ENCODE measurements at regions of chr12 and their contacts with region 1.

Region 1: DNA sequence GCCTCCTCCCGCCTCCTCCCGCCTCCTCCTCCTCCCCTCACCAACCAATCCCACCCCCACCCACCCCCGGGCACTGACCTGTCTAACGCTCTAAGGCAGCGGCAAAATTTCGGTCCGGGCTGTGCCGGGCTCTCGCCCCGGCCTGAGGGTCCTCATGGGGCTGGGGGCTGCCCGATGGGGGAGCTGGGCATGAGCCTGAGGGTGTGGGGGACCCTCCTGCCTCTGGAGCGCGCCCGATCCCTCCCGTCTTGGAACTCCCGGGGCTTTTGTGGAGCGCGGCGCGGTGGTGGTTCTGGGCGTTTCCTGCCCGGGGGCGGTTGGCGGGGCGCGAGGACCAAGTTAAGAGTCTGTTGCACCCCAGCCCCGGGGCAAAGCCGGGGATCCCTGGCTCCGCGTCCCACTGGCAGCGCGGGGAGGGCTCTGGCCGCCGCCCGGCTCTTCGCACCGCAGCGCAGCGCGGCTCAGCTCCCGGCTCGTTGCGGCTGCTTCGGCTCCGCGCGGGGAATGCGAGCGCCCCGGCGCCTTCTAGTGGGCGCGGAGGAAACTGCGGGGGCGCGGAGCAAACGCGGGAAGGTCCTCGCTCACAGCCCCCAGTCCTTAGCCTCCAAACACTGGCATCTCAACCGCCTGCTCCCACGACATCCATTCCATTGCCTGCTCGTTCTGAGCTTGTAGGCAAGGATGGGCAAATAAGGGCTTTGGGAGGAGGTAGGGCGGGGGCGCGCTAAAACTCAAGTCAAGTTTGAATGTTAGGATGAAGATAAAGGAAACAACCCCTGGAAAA is at the start of gene B4GALNT1:
- DNase-seq: peak; percentile 91
- H3K4me3 ChIP-seq: peak within 1 kb of the TSS; percentile 55 to 85
- H3K27ac ChIP-seq: peak within 1 kb of the TSS in 1 of 2 experiments; percentile 11; a peak in 1 of 4 replicates
- H3K4me1 ChIP-seq: peaks cover 0 to 2% of the 10 kb centered on the region in 2 experiments; a peak in 1 of 4 replicates
- H3K27me3 ChIP-seq: no peaks in the 10 kb centered on the region; the same call in 1 of the 2 replicates
- CTCF ChIP-seq: peak; percentile 77
- EP300 ChIP-seq: no peak
- RAD21 ChIP-seq: peak; percentile 54
- polyA plus RNA-seq, gene B4GALNT1: 5.2 and 5.3 TPM in 2 replicates

Region 2: GRCh38 chr12:57462251-57462911 is 170.5 kb before region 1 on chr12:
- CTCF ChIA-PET with region 1: interaction called, 15 read pairs
- POLR2A ChIA-PET with region 1: no interaction called
- DNase-seq: peak; percentile 95
- H3K4me3 ChIP-seq: peak overlapping the region; percentile 60 to 90
- H3K27ac ChIP-seq: peak overlapping the region; percentile 48 to 61; a peak in 3 of 4 replicates
- H3K4me1 ChIP-seq: peaks cover 0 to 20% of the 10 kb centered on the region in 2 experiments; a peak in 2 of 4 replicates
- H3K27me3 ChIP-seq: peaks cover 13% of the 10 kb centered on the region; the same call in 1 of the 2 replicates
- CTCF ChIP-seq: peak; percentile 98
- EP300 ChIP-seq: no peak
- RAD21 ChIP-seq: peak; percentile 67

Region 3: DNA sequence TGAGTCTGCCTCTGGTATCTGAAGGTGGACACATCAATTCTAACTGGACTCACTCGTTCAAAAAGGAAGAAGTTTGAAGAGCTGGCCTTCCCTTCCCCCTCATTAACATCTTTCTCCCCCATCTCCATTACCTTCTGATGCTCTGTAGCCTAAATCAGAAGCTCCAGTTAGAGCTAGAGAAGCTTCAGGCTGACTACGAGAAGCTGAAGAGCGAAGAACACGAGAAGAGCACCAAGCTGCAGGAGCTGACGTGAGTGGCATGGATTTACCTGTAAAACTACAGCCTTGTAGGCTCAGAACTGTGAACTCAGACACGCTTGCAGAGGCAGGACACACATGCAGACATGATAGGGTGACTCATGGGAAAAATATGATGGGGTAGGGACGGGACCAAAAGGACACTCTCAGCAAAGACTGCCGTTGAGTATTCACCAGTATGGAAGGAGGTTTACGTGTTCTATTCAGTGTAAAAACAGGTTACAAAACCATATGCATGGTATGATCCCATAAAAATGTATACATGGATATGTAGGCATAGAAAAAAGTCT is 56.2 kb before region 1 on chr12:
- CTCF ChIA-PET with region 1: interaction called, 298 read pairs
- POLR2A ChIA-PET with region 1: no interaction called
- DNase-seq: no peak
- H3K4me3 ChIP-seq: no peak overlapping the region
- H3K27ac ChIP-seq: no peak overlapping the region
- H3K4me1 ChIP-seq: no peaks in the 10 kb centered on the region
- H3K27me3 ChIP-seq: no peaks in the 10 kb centered on the region
- CTCF ChIP-seq: no peak
- EP300 ChIP-seq: no peak
- RAD21 ChIP-seq: no peak

Region 4: GRCh38 chr12:57590536-57591479 is 42.1 kb before region 1 on chr12 and contains the start of gene PIP4K2C:
- CTCF ChIA-PET with region 1: interaction called, 298 read pairs
- POLR2A ChIA-PET with region 1: no interaction called
- DNase-seq: peak; percentile 90
- H3K4me3 ChIP-seq: peak within 1 kb of the TSS; percentile 89 to 92
- H3K27ac ChIP-seq: peak within 1 kb of the TSS; percentile 6 to 47; a peak in 2 of 4 replicates
- H3K4me1 ChIP-seq: peaks cover 8 to 14% of the 10 kb centered on the region in 2 experiments; a peak in 2 of 4 replicates
- H3K27me3 ChIP-seq: no peaks in the 10 kb centered on the region
- CTCF ChIP-seq: no peak
- EP300 ChIP-seq: no peak
- RAD21 ChIP-seq: no peak
- polyA plus RNA-seq, gene PIP4K2C: 34.2 and 40.1 TPM in 2 replicates

Region 5: GRCh38 chr12:57611108-57611809 is 21.6 kb before region 1 on chr12 and contains the start of gene ARHGEF25:
- CTCF ChIA-PET with region 1: interaction called, 39 read pairs
- POLR2A ChIA-PET with region 1: no interaction called
- DNase-seq: peak; percentile 97
- H3K4me3 ChIP-seq: peak within 1 kb of the TSS; percentile 51 to 75
- H3K27ac ChIP-seq: peak within 1 kb of the TSS; percentile 36 to 86; a peak in 3 of 4 replicates
- H3K4me1 ChIP-seq: peaks cover 5 to 29% of the 10 kb centered on the region in 2 experiments; a peak in 2 of 4 replicates
- H3K27me3 ChIP-seq: no peaks in the 10 kb centered on the region
- CTCF ChIP-seq: no peak
- EP300 ChIP-seq: no peak
- RAD21 ChIP-seq: no peak
- polyA plus RNA-seq, gene ARHGEF25: 48.1 and 51.6 TPM in 2 replicates

Region 6: GRCh38 chr12:57657744-57658143 is 24.9 kb after region 1 on chr12:
- CTCF ChIA-PET with region 1: interaction called, 15 read pairs
- POLR2A ChIA-PET with region 1: no interaction called
- DNase-seq: no peak
- H3K4me3 ChIP-seq: no peak overlapping the region
- H3K27ac ChIP-seq: no peak overlapping the region
- H3K4me1 ChIP-seq: no peaks in the 10 kb centered on the region
- H3K27me3 ChIP-seq: 0 out of 2 replicates have a peak, but pooled peaks cover 5% of the 10 kb centered on the region
- CTCF ChIP-seq: no peak
- EP300 ChIP-seq: no peak
- RAD21 ChIP-seq: no peak

Region 7: GRCh38 chr12:57726151-57726883 is 93.4 kb after region 1 on chr12:
- CTCF ChIA-PET with region 1: interaction called, 25 read pairs
- POLR2A ChIA-PET with region 1: no interaction called
- DNase-seq: peak; percentile 96
- H3K4me3 ChIP-seq: peak overlapping the region; percentile 76 to 79
- H3K27ac ChIP-seq: peak overlapping the region; percentile 49 to 82; a peak in 3 of 4 replicates
- H3K4me1 ChIP-seq: peaks cover 0 to 8% of the 10 kb centered on the region in 2 experiments; a peak in 1 of 4 replicates
- H3K27me3 ChIP-seq: no peaks in the 10 kb centered on the region
- CTCF ChIP-seq: peak; percentile 86
- EP300 ChIP-seq: no peak
- RAD21 ChIP-seq: peak; percentile 56

Measured in SK-N-SH (cell line).